ENCODE measurements at regions of chr10 and their contacts with region 1.

Region 1: GRCh38 chr10:92290837-92291615 is at the starts of genes CPEB3 and MARCHF5:
- DNase-seq: peak; percentile 94
- ATAC-seq: peak; percentile 96
- H3K4me3 ChIP-seq: peak within 1 kb of the TSS; percentile 85
- H3K27ac ChIP-seq: peak within 1 kb of the TSS; percentile 58
- H3K4me1 ChIP-seq: 0 out of 2 replicates have a peak, but pooled peaks cover 6% of the 10 kb centered on the region
- H3K27me3 ChIP-seq: no peaks in the 10 kb centered on the region
- CTCF ChIP-seq: peak; percentile 45
- total RNA-seq, gene CPEB3: 0.80 and 1.3 TPM in 2 replicates
- total RNA-seq, gene MARCHF5: 6.7 and 7.4 TPM in 2 replicates

Region 2: DNA sequence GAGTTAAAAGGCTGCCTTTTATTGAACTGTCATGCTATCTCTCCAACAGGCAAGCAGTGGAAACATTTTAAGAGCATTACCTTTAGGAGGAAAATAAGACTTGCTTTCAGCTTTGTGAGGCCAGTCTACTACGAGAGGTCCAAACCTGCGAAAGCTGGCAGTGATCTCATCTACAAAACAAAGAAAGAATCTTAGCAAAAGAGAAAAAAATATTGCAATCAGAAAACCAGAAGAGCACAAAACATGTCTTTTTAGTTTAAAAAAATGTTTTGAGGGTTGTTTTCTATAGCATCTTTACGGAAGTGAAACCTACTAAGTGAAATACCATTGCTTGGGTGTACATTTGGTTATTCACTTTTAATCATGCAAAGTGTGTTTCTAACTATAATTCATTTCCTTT is 148.1 kb before region 1 on chr10:
- CTCF ChIA-PET with region 1: interaction called, 8 read pairs
- POLR2A ChIA-PET with region 1: no interaction called
- intact Hi-C with region 1: loop called (anchors 5 kb)
- DNase-seq: no peak
- ATAC-seq: peak; percentile 28; the same call in 1 of the 2 replicates
- H3K4me3 ChIP-seq: no peak overlapping the region
- H3K27ac ChIP-seq: peak overlapping the region; percentile 66; the same call in 1 of the 2 replicates
- H3K4me1 ChIP-seq: peaks cover 16% of the 10 kb centered on the region
- H3K27me3 ChIP-seq: no peaks in the 10 kb centered on the region
- CTCF ChIP-seq: no peak

Region 3: GRCh38 chr10:92240289-92241157 is 50.5 kb before region 1 on chr10:
- CTCF ChIA-PET with region 1: interaction called, 7 read pairs
- POLR2A ChIA-PET with region 1: interaction called, 3 read pairs
- intact Hi-C with region 1: loop called (anchors 1 kb)
- DNase-seq: peak; percentile 59
- ATAC-seq: peak; percentile 39
- H3K4me3 ChIP-seq: peak overlapping the region; percentile 75
- H3K27ac ChIP-seq: 0 out of 2 replicates have a peak overlapping the region, but pooled peaks have one; percentile 4
- H3K4me1 ChIP-seq: peaks cover 45% of the 10 kb centered on the region
- H3K27me3 ChIP-seq: no peaks in the 10 kb centered on the region
- CTCF ChIP-seq: no peak

Region 4: GRCh38 chr10:92432596-92432995 is 141.6 kb after region 1 on chr10:
- CTCF ChIA-PET with region 1: interaction called, 3 read pairs
- POLR2A ChIA-PET with region 1: no interaction called
- intact Hi-C with region 1: loop called (anchors 2 kb)
- DNase-seq: no peak
- ATAC-seq: no peak
- H3K4me3 ChIP-seq: no peak overlapping the region
- H3K27ac ChIP-seq: no peak overlapping the region
- H3K4me1 ChIP-seq: no peaks in the 10 kb centered on the region
- H3K27me3 ChIP-seq: no peaks in the 10 kb centered on the region
- CTCF ChIP-seq: no peak

Region 5: GRCh38 chr10:92450896-92451295 is 159.9 kb after region 1 on chr10:
- CTCF ChIA-PET with region 1: no interaction called
- POLR2A ChIA-PET with region 1: no interaction called
- intact Hi-C with region 1: no loop called
- DNase-seq: no peak
- ATAC-seq: no peak
- H3K4me3 ChIP-seq: no peak overlapping the region
- H3K27ac ChIP-seq: no peak overlapping the region
- H3K4me1 ChIP-seq: no peaks in the 10 kb centered on the region
- H3K27me3 ChIP-seq: no peaks in the 10 kb centered on the region
- CTCF ChIP-seq: no peak

Region 6: DNA sequence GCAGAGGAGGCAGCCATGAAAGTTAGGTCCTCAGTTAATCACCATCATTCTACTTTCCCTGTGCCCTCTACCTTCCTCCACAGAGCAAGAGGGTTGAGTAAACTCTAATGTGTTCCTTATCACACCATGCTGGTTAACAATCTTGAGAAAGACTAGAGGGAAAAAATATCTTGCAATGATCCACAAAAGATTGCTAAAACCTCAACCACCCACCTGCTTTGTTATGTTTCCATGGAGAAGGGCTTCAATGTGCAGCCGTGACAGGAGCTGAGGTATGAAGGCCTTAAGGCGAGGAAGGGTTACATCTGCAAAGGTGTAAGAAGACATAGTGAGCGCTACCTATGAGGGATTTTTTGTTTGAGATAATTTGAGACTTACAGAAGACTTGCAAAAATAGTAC is 179.0 kb after region 1 on chr10:
- CTCF ChIA-PET with region 1: no interaction called
- POLR2A ChIA-PET with region 1: no interaction called
- intact Hi-C with region 1: no loop called
- DNase-seq: no peak
- ATAC-seq: no peak
- H3K4me3 ChIP-seq: no peak overlapping the region
- H3K27ac ChIP-seq: no peak overlapping the region
- H3K4me1 ChIP-seq: no peaks in the 10 kb centered on the region
- H3K27me3 ChIP-seq: no peaks in the 10 kb centered on the region
- CTCF ChIP-seq: no peak